CD4-positive, alpha-beta memory T cell (primary cell): ENCODE measurements at regions of chr2 and their contacts with region 1.

Region 1: GRCh38 chr2:8681786-8682692 is at the start of gene ID2:
- DNase-seq: peak; percentile 98 to 99 (median 98)
- H3K4me3 ChIP-seq: peak within 1 kb of the TSS; percentile 82 to 85
- H3K4me3 Mint-ChIP-seq: peak within 1 kb of the TSS; percentile 94 to 100 (median 99)
- H3K27ac ChIP-seq: peak within 1 kb of the TSS; percentile 74
- H3K27ac Mint-ChIP-seq: peak within 1 kb of the TSS; percentile 90 to 97 (median 96)
- H3K4me1 ChIP-seq: peaks cover 41% of the 10 kb centered on the region
- H3K4me1 Mint-ChIP-seq: peaks cover 32 to 61% (median 37%) of the 10 kb centered on the region in 4 donors
- H3K27me3 ChIP-seq: no peaks in the 10 kb centered on the region
- H3K27me3 Mint-ChIP-seq: peaks cover 9 to 18% of the 10 kb centered on the region in 2 donors
- total RNA-seq, gene ID2: 50.8 to 56.4 TPM

Region 2: GRCh38 chr2:7450188-7450832 is 1231.7 kb before region 1 on chr2:
- CTCF ChIA-PET with region 1: no interaction called
- POLR2A ChIA-PET with region 1: interaction called, 13 read pairs
- intact Hi-C with region 1: no loop called
- DNase-seq: peak; percentile 54 to 72 (median 59)
- H3K4me3 ChIP-seq: no peak overlapping the region
- H3K4me3 Mint-ChIP-seq: peak overlapping the region in 7 of 8 donors; percentile 60 to 83 (median 67)
- H3K27ac ChIP-seq: no peak overlapping the region
- H3K27ac Mint-ChIP-seq: peak overlapping the region; percentile 85 to 95 (median 93)
- H3K4me1 ChIP-seq: peaks cover 60% of the 10 kb centered on the region
- H3K4me1 Mint-ChIP-seq: peaks cover 44 to 66% (median 57%) of the 10 kb centered on the region in 4 donors
- H3K27me3 ChIP-seq: no peaks in the 10 kb centered on the region
- H3K27me3 Mint-ChIP-seq: no peaks in the 10 kb centered on the region

Region 3: GRCh38 chr2:7730449-7730848 is 951.6 kb before region 1 on chr2:
- CTCF ChIA-PET with region 1: interaction called, 40 read pairs
- POLR2A ChIA-PET with region 1: interaction called, 101 read pairs
- intact Hi-C with region 1: loop called (anchors 1 kb)
- DNase-seq: peak in 1 of 5 donors; percentile 38
- H3K4me3 ChIP-seq: peak overlapping the region in 1 of 2 donors; percentile 33
- H3K4me3 Mint-ChIP-seq: peak overlapping the region; percentile 80 to 96 (median 88)
- H3K27ac ChIP-seq: peak overlapping the region; percentile 42
- H3K27ac Mint-ChIP-seq: peak overlapping the region; percentile 68 to 97 (median 94)
- H3K4me1 ChIP-seq: peaks cover 38% of the 10 kb centered on the region
- H3K4me1 Mint-ChIP-seq: peaks cover 35 to 80% (median 54%) of the 10 kb centered on the region in 4 donors
- H3K27me3 ChIP-seq: no peaks in the 10 kb centered on the region
- H3K27me3 Mint-ChIP-seq: no peaks in the 10 kb centered on the region

Region 4: GRCh38 chr2:8312861-8313830 is 368.9 kb before region 1 on chr2:
- CTCF ChIA-PET with region 1: interaction called, 3 read pairs
- POLR2A ChIA-PET with region 1: interaction called, 13 read pairs
- intact Hi-C with region 1: no loop called
- DNase-seq: peak in 1 of 5 donors; percentile 20
- H3K4me3 ChIP-seq: no peak overlapping the region
- H3K4me3 Mint-ChIP-seq: peak overlapping the region in 7 of 8 donors; percentile 52 to 72 (median 69)
- H3K27ac ChIP-seq: peak overlapping the region; percentile 9
- H3K27ac Mint-ChIP-seq: peak overlapping the region; percentile 52 to 94 (median 86)
- H3K4me1 ChIP-seq: peaks cover 68% of the 10 kb centered on the region
- H3K4me1 Mint-ChIP-seq: peaks cover 49 to 70% (median 64%) of the 10 kb centered on the region in 4 donors
- H3K27me3 ChIP-seq: no peaks in the 10 kb centered on the region
- H3K27me3 Mint-ChIP-seq: no peaks in the 10 kb centered on the region

Region 5: DNA sequence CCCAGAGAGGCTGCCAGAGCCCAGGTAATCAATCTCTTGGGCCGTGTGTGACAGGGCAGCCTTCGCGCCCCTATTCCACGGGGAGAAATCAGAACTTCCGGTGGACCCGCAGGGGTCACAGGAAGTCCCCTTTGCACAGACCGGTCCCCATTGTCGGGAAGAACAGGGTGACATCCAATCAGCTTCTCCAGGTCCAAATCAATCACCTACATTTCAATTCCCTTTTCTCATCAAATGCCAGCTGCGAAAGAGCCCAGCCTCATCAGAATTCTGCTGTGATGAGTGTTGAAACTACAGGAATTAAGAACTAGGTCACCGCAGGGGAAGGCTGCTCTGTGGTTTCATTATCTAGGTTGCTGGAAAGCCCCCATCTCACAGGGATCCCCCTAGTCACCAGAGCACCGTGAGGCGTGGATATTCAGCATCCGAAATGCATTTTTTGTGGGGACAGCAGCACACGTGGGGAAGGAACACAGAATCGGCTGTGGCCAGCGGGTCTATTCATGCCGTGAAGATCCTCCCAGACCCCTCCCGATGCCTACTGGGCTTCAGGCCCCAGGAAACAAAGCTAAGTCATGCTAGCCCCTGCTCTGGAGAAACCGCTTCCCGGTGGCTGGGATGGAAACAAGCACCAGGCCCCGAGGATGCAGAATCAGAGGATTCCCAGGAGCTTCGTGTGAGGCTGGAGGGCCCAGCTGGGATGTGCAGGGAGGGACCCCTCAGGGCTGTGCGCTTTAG is 193.9 kb before region 1 on chr2:
- CTCF ChIA-PET with region 1: interaction called, 5 read pairs
- POLR2A ChIA-PET with region 1: interaction called, 25 read pairs
- intact Hi-C with region 1: loop called (anchors 2 kb)
- DNase-seq: peak; percentile 76 to 94 (median 85)
- H3K4me3 ChIP-seq: peak overlapping the region; percentile 50 to 66
- H3K4me3 Mint-ChIP-seq: peak overlapping the region; percentile 82 to 93 (median 88)
- H3K27ac ChIP-seq: peak overlapping the region; percentile 83
- H3K27ac Mint-ChIP-seq: peak overlapping the region; percentile 94 to 100 (median 99)
- H3K4me1 ChIP-seq: peaks cover 73% of the 10 kb centered on the region
- H3K4me1 Mint-ChIP-seq: peaks cover 44 to 79% (median 56%) of the 10 kb centered on the region in 4 donors
- H3K27me3 ChIP-seq: no peaks in the 10 kb centered on the region
- H3K27me3 Mint-ChIP-seq: no peaks in the 10 kb centered on the region

Region 6: GRCh38 chr2:8606226-8606625 is 75.8 kb before region 1 on chr2:
- CTCF ChIA-PET with region 1: no interaction called
- POLR2A ChIA-PET with region 1: no interaction called
- intact Hi-C with region 1: no loop called
- DNase-seq: no peak
- H3K4me3 ChIP-seq: no peak overlapping the region
- H3K4me3 Mint-ChIP-seq: no peak overlapping the region
- H3K27ac ChIP-seq: no peak overlapping the region
- H3K27ac Mint-ChIP-seq: no peak overlapping the region
- H3K4me1 ChIP-seq: peaks cover 4% of the 10 kb centered on the region
- H3K4me1 Mint-ChIP-seq: peaks cover 0 to 16% (median 8%) of the 10 kb centered on the region in 4 donors
- H3K27me3 ChIP-seq: no peaks in the 10 kb centered on the region
- H3K27me3 Mint-ChIP-seq: no peaks in the 10 kb centered on the region

Region 7: GRCh38 chr2:8659092-8659728 is 22.8 kb before region 1 on chr2:
- CTCF ChIA-PET with region 1: no interaction called
- POLR2A ChIA-PET with region 1: no interaction called
- intact Hi-C with region 1: no loop called
- DNase-seq: no peak
- H3K4me3 ChIP-seq: no peak overlapping the region
- H3K4me3 Mint-ChIP-seq: no peak overlapping the region
- H3K27ac ChIP-seq: no peak overlapping the region
- H3K27ac Mint-ChIP-seq: no peak overlapping the region
- H3K4me1 ChIP-seq: peaks cover 6% of the 10 kb centered on the region
- H3K4me1 Mint-ChIP-seq: peaks cover 4 to 12% (median 8%) of the 10 kb centered on the region in 4 donors
- H3K27me3 ChIP-seq: no peaks in the 10 kb centered on the region
- H3K27me3 Mint-ChIP-seq: peaks cover 6 to 7% of the 10 kb centered on the region in 2 donors

Region 8: DNA sequence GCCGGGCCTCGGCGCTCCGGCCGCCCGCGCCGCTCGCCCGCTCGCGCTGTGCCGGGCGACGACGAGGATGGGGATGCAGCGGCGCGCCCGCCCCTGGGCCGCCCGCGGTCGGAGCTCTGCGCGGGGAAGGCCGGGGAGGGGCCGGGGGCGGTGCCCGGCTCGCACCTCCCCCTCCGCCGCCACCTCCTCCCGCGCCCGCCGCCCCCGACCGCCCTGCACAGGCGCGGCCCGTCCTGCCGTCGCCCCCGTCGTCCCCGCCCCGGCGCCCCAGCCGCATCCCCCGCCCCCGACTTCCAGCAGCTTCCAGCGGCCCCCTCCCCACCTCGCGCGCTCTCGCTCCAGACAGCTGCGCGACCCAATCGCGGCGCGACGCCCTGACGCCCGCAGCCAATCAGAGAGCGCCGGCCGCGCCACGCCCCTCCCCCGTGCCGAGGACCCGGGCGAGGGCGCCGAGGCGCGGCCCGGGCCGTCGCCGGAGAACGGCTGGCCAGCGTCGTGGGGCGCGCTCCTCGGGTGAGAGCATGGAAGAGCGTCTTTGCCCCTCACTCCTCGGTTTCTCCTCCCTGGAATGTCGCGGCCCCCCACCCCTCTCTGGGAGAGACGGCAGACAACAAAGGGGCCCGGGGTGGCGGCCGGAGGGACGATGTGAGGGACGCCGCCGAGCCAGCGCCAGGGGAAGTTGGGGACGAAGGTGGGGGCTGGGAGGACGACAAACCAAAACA is 321.7 kb after region 1 on chr2 and contains the start of gene MBOAT2:
- CTCF ChIA-PET with region 1: no interaction called
- POLR2A ChIA-PET with region 1: interaction called, 3 read pairs
- intact Hi-C with region 1: loop called (anchors 5 kb)
- DNase-seq: peak; percentile 70 to 79 (median 74)
- H3K4me3 ChIP-seq: peak within 1 kb of the TSS in 1 of 2 donors; percentile 55
- H3K4me3 Mint-ChIP-seq: peak within 1 kb of the TSS; percentile 83 to 89 (median 87)
- H3K27ac ChIP-seq: peak within 1 kb of the TSS; percentile 31
- H3K27ac Mint-ChIP-seq: peak within 1 kb of the TSS; percentile 67 to 82 (median 79)
- H3K4me1 ChIP-seq: peaks cover 6% of the 10 kb centered on the region
- H3K4me1 Mint-ChIP-seq: peaks cover 10 to 22% (median 14%) of the 10 kb centered on the region in 4 donors
- H3K27me3 ChIP-seq: no peaks in the 10 kb centered on the region
- H3K27me3 Mint-ChIP-seq: no peaks in the 10 kb centered on the region
- total RNA-seq, gene MBOAT2: 1.5 to 2.0 TPM